ENCODE measurements at regions of chr10 and their contacts with region 1.

Region 1: GRCh38 chr10:97792141-97792721 is 20.4 kb upstream of the SFRP5 start:
- DNase-seq: peak; percentile 58 to 94
- H3K4me3 ChIP-seq: no peak overlapping the region
- H3K27ac ChIP-seq: no peak overlapping the region
- H3K4me1 ChIP-seq: peaks cover 0 to 5% (median 2%) of the 10 kb centered on the region in 4 experiments; a peak in 3 of 7 replicates
- H3K27me3 ChIP-seq: no peaks in the 10 kb centered on the region
- CTCF ChIP-seq: peak; percentile 95 to 97 (median 96)
- EP300 ChIP-seq: no peak
- POLR2A ChIP-seq: no peak
- RAD21 ChIP-seq: peak; percentile 93 to 95

Region 2: DNA sequence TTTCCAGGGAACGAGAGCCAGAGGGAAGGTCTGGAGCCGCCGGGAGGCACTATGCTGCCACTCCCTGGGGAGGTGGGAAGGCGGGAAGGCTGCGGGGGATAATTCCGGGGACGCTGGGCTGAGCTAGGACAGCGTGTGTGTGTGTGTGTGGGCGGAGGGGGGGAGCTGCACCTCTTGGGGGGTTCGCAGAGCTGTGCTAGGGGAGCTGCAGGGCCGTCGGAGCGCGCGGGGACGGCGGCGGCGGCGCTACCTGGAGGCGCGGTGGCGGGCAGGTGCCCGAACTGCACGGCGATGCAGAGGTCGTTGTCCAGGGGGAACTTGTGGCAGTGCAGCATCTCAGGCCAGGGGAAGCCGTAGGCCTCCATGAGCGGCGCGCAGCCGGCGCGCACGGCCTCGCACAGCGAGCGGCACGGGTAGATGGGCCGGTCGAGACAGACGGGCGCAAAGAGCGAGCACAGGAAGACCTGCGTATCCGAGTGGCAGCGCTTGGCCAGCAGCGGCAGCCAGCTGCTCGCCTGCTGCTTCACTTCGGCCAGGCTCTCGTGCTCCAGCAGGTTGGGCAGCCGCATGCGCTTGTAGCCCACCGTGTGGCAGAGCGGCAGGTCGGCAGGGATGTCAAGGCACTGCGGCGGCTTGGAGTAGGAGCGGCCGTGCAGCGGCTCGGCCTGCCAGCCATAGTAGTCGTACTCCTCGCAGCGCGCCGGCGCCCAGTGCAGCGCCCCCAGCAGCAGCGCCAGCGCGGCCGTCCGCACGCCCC is 21.0 kb before region 1 on chr10:
- CTCF ChIA-PET with region 1: interaction called, 26 read pairs
- POLR2A ChIA-PET with region 1: no interaction called
- DNase-seq: peak in 1 of 2 experiments; percentile 74
- H3K4me3 ChIP-seq: peak overlapping the region; percentile 54 to 60 (median 55)
- H3K27ac ChIP-seq: no peak overlapping the region
- H3K4me1 ChIP-seq: peaks cover 2 to 10% (median 7%) of the 10 kb centered on the region in 4 experiments; a peak in 6 of 7 replicates
- H3K27me3 ChIP-seq: peaks cover 14 to 51% (median 40%) of the 10 kb centered on the region in 4 experiments
- CTCF ChIP-seq: peak in 2 of 3 experiments; percentile 30 to 33; a peak in 2 of 4 replicates
- EP300 ChIP-seq: no peak
- POLR2A ChIP-seq: no peak
- RAD21 ChIP-seq: 0 out of 4 replicates have a peak, but pooled peaks of 1 of the 2 experiments have one; percentile 14

Region 3: DNA sequence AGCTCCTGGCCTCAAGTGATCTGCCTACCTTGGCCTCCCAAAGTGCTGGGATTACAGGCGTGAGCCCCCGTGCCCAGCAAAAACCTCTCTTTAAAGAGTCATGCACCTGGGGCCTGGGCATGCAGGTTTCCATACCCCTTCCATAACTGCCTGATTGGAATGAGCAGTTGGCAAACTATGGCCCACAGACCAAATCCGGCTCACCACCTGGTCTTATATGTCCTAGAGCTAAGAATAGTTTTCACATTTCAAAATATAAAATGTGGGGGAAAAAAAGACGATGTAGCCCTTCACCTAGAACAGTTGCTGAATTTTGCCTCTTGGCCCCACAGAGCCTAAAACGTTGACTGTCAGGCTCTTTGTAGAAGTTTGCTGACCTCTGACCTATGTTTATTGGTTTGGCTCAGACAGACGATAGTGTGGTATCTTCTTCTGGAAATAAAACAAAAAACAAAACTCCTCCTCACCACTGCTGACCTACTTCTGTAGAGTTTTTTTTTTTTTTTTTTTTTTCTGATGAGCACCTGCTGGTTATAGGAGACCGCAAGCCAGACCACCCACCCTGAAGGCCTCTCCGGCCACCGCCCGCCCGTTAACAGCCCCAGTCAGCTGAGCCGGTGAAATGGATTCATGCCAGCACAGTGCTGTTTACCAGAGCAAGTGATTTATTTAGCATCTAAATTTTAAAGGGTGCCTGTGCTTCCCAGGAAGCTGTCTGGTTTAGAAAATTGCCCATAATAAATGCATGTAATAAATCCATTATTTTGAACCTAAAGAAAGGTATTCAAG is 13.1 kb after region 1 on chr10:
- CTCF ChIA-PET with region 1: interaction called, 50 read pairs
- POLR2A ChIA-PET with region 1: no interaction called
- DNase-seq: no peak
- H3K4me3 ChIP-seq: no peak overlapping the region
- H3K27ac ChIP-seq: no peak overlapping the region
- H3K4me1 ChIP-seq: peaks cover 0 to 7% (median 1%) of the 10 kb centered on the region in 4 experiments; a peak in 2 of 7 replicates
- H3K27me3 ChIP-seq: no peaks in the 10 kb centered on the region
- CTCF ChIP-seq: no peak
- EP300 ChIP-seq: no peak
- POLR2A ChIP-seq: no peak
- RAD21 ChIP-seq: no peak

Region 4: GRCh38 chr10:97827778-97828291 is 35.6 kb after region 1 on chr10:
- CTCF ChIA-PET with region 1: interaction called, 12 read pairs
- POLR2A ChIA-PET with region 1: no interaction called
- DNase-seq: no peak
- H3K4me3 ChIP-seq: no peak overlapping the region
- H3K27ac ChIP-seq: no peak overlapping the region
- H3K4me1 ChIP-seq: peaks cover 0 to 4% (median 0%) of the 10 kb centered on the region in 4 experiments; a peak in 2 of 7 replicates
- H3K27me3 ChIP-seq: no peaks in the 10 kb centered on the region
- CTCF ChIP-seq: no peak
- EP300 ChIP-seq: no peak
- POLR2A ChIP-seq: no peak
- RAD21 ChIP-seq: no peak

Region 5: GRCh38 chr10:97869091-97870042 is 77.1 kb after region 1 on chr10:
- CTCF ChIA-PET with region 1: interaction called, 236 read pairs
- POLR2A ChIA-PET with region 1: interaction called, 6 read pairs
- DNase-seq: peak in 1 of 2 experiments; percentile 71
- H3K4me3 ChIP-seq: no peak overlapping the region
- H3K27ac ChIP-seq: no peak overlapping the region; the same call in 1 of the 2 replicates
- H3K4me1 ChIP-seq: peaks cover 4 to 22% (median 9%) of the 10 kb centered on the region in 4 experiments
- H3K27me3 ChIP-seq: no peaks in the 10 kb centered on the region
- CTCF ChIP-seq: peak; percentile 61 to 94 (median 79)
- EP300 ChIP-seq: no peak
- POLR2A ChIP-seq: no peak
- RAD21 ChIP-seq: peak; percentile 84 to 88

Region 6: DNA sequence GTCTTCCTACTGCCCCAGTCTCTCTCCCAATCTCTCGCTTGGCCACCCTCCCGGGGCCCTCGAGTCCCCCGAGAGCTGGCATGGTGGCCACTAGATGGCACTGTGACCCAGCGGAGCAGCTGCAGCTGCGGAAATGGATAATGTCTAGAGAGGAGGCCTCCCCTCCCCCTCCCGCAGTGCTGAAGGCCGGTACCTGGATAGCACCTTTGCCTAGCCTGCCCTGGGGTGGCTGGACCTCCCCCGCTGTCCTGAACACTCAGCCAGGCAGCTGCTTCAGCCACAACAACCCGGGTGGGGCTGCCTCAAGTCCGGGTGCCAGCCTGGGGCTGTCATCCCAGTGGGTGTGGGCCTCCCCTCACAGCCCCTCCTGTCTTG is 122.6 kb after region 1 on chr10:
- CTCF ChIA-PET with region 1: interaction called, 10 read pairs
- POLR2A ChIA-PET with region 1: no interaction called
- DNase-seq: peak; percentile 46 to 95
- H3K4me3 ChIP-seq: no peak overlapping the region
- H3K27ac ChIP-seq: no peak overlapping the region
- H3K4me1 ChIP-seq: peaks cover 0 to 6% (median 1%) of the 10 kb centered on the region in 4 experiments; a peak in 2 of 7 replicates
- H3K27me3 ChIP-seq: peaks cover 0 to 6% (median 1%) of the 10 kb centered on the region in 4 experiments; a peak in 3 of 7 replicates
- CTCF ChIP-seq: peak; percentile 75 to 97 (median 87)
- EP300 ChIP-seq: 0 out of 3 replicates have a peak, but pooled peaks of 1 of the 2 experiments have one; percentile 24
- POLR2A ChIP-seq: no peak
- RAD21 ChIP-seq: peak; percentile 99

Measured in H1 (cell line).